ENCODE measurements at regions of chrX and their contacts with region 1.

Region 1: GRCh38 chrX:15854712-15855567 is at the start of gene AP1S2:
- DNase-seq: peak; percentile 81 to 95
- H3K4me3 ChIP-seq: peak within 1 kb of the TSS; percentile 78
- H3K27ac ChIP-seq: peak within 1 kb of the TSS; percentile 61
- H3K4me1 ChIP-seq: peaks cover 7% of the 10 kb centered on the region; the same call in 1 of the 2 replicates
- H3K27me3 ChIP-seq: no peaks in the 10 kb centered on the region
- CTCF ChIP-seq: no peak
- total RNA-seq, gene AP1S2: 10.6 and 14.2 TPM in 2 replicates

Region 2: DNA sequence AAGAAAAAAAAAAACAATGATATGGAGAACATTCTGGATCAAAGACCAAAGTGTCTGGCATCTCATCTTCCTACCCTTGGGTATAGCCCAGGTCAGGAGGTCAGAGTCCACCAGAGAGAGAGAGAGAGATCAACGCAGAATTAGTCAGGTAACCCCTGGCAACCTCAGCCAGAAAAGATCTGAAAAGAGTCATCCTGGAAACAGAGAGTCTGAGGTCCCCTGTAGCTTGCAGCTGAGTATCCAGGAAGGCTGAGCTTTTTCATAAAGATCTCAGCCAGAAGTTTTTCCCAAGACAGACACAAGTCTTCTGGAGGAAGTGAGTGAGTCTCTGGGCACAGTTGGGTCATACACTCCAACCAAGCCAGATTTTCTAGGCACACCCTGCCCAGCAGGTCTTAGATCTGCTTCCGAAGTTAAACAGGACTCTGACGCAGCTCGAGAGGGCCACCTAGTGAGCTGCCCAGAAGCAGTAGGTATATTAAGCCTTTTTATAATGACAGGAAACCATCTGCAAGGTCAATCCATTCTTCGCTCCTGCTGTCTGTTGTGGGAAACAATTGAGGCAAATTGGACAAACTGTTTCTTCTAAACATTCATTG is 289.9 kb before region 1 on chrX:
- CTCF ChIA-PET with region 1: no interaction called
- POLR2A ChIA-PET with region 1: no interaction called
- intact Hi-C with region 1: no loop called
- DNase-seq: peak; percentile 66 to 80
- H3K4me3 ChIP-seq: no peak overlapping the region
- H3K27ac ChIP-seq: no peak overlapping the region
- H3K4me1 ChIP-seq: peaks cover 6% of the 10 kb centered on the region
- H3K27me3 ChIP-seq: no peaks in the 10 kb centered on the region
- CTCF ChIP-seq: peak; percentile 71

Region 3: GRCh38 chrX:15882704-15883539 is 28.0 kb after region 1 on chrX:
- CTCF ChIA-PET with region 1: no interaction called
- POLR2A ChIA-PET with region 1: interaction called, 20 read pairs
- intact Hi-C with region 1: no loop called
- DNase-seq: peak in 1 of 2 experiments; percentile 2
- H3K4me3 ChIP-seq: no peak overlapping the region
- H3K27ac ChIP-seq: no peak overlapping the region
- H3K4me1 ChIP-seq: 0 out of 2 replicates have a peak, but pooled peaks cover 5% of the 10 kb centered on the region
- H3K27me3 ChIP-seq: no peaks in the 10 kb centered on the region
- CTCF ChIP-seq: no peak

Measured in PC-9 (cell line).